Activated CD4-positive, alpha-beta memory T cell treated with anti-CD3 and anti-CD28 coated beads for 36 hours (primary cell): ENCODE measurements at regions of chr3 and their contacts with region 1.

Region 1: DNA sequence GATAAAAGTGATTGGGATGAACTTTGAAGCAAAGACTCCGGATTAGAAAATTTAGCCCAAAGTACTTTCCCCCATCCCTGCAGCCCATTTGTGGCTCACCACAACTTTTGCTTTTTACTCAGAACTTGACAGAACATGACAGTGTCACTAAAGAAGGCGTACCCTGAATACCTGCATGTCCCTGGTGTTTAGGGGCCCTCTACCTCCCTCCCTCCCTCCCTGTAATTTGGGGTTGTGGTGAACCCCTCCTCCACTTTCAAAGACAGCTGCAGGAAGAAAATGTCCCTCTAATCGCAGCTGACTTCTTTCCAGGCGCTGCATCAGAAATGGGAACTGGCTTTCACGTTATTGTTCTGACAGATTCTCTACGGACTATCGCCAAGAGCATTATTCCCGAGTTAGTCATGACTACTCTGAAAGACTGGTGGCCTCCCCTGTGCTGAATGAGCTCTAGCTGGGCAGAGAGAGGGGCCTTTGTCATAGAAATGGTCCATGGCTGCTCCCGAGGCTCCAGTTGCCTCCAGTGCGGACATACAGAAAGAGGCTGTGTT is 93.2 kb upstream of the ARHGEF3 start:
- DNase-seq: peak; percentile 51
- H3K4me3 Mint-ChIP-seq: peak overlapping the region; percentile 29
- H3K27ac Mint-ChIP-seq: peak overlapping the region; percentile 18
- H3K4me1 Mint-ChIP-seq: peaks cover 59% of the 10 kb centered on the region
- H3K27me3 Mint-ChIP-seq: no peaks in the 10 kb centered on the region

Region 2: GRCh38 chr3:56878074-56878473 is 16.9 kb before region 1 on chr3:
- CTCF ChIA-PET with region 1: interaction called, 3 read pairs
- POLR2A ChIA-PET with region 1: no interaction called
- intact Hi-C with region 1: loop called (anchors 2 kb)
- DNase-seq: peak; percentile 79
- H3K4me3 Mint-ChIP-seq: peak overlapping the region; percentile 57
- H3K27ac Mint-ChIP-seq: peak overlapping the region; percentile 85
- H3K4me1 Mint-ChIP-seq: peaks cover 80% of the 10 kb centered on the region
- H3K27me3 Mint-ChIP-seq: no peaks in the 10 kb centered on the region